PC-3 (cell line): ENCODE measurements at regions of chr4 and their contacts with region 1.

Region 1: DNA sequence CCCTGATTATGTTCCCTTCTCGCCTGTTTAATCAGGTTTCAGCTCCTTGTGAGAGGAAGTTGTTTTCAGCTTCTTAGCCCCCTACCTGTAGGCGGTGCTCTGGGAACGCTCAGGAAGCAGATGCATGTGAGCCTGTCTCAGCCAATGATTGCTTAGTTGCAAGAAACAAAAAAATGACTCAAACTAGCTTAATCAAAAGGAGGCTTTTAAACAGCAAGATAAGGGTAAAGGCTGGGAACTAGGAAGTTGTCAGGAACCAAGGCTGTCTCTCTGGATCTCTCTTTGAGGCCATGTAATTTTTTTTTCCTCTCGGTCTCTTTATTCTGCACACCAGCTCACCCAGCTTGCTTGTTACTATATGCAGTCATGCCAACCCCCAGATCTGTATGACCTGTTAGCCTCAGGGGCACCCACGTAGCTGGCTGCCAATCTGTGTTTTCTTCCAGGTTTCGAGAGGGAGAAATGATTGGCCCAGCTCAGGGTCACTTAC is 109.1 kb downstream of the PTTG2 start:
- DNase-seq: peak; percentile 77
- ATAC-seq: peak; percentile 88
- H3K4me3 ChIP-seq: no peak overlapping the region
- H3K27ac ChIP-seq: no peak overlapping the region
- H3K4me1 ChIP-seq: peaks cover 6% of the 10 kb centered on the region
- H3K27me3 ChIP-seq: no peaks in the 10 kb centered on the region
- CTCF ChIP-seq: peak; percentile 91

Region 2: DNA sequence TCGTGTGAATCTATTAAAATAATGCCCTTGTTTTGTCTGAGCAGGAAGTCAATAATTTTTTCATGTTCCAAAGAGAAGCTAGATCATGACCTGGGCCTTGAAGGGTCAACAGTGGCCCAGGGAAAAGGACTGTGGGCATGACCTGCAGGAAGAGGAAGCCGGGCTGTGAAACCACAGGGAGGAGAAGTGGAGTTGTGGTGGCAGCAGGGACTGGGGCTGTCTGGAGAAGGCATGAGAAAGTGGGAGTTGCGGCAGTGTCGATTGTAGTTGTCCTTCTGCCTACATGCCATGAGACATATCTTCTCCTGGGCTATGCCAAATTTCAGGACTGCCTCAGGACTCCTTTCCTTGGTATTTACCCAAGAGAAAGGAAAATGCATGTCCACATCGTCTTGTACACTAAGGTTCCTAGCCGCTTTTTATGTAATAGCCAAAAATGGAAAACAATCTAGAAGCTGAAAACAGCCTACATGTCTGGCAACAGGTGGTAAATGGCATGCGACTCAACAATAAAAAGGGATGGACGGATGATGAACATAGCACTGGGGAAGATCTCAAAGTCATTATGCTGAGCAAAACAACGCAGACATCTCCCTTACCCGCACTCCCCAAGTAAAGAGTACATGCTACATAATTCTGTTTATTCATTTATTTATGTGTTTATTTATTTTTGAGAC is 122.7 kb before region 1 on chr4:
- CTCF ChIA-PET with region 1: no interaction called
- POLR2A ChIA-PET with region 1: no interaction called
- intact Hi-C with region 1: no loop called
- DNase-seq: no peak
- ATAC-seq: no peak
- H3K4me3 ChIP-seq: no peak overlapping the region
- H3K27ac ChIP-seq: no peak overlapping the region
- H3K4me1 ChIP-seq: peaks cover 6% of the 10 kb centered on the region; the same call in 1 of the 2 replicates
- H3K27me3 ChIP-seq: no peaks in the 10 kb centered on the region
- CTCF ChIP-seq: no peak

Region 3: DNA sequence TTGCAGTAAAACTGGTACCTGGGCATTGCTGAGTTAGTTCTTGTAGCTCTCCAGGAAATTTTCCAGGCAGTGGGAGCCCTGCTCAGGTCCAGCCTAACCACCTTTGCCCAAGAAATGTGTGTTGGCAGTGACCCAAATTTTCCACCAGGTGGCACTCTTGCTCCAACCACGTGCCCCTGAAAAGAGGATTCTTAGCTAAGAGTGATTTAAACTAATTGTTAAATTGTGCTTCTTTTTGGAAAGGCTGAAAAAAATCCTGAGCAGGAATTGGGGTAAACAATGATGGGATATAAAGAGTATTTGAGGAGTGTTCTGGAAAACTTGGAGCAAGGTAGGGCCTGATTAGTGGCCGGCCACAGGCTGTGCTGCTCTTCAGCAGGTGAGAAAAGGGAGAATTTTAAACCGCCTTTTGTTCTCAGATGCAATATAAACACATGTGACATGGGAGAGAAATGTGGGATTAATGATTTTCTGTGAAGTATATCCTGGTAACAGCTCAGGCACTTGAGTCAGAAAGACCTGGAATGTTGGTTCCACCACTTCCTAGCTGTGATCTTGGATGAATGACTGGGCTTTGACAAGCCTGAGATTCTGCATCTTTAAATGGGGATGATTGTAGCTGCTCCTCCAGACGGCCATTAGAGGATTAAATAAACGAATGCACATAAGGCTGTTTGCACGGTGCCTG is 110.5 kb after region 1 on chr4:
- CTCF ChIA-PET with region 1: interaction called, 14 read pairs
- POLR2A ChIA-PET with region 1: no interaction called
- intact Hi-C with region 1: loop called (anchors 1 kb)
- DNase-seq: peak; percentile 78
- ATAC-seq: peak; percentile 86
- H3K4me3 ChIP-seq: no peak overlapping the region
- H3K27ac ChIP-seq: peak overlapping the region; percentile 72
- H3K4me1 ChIP-seq: peaks cover 15% of the 10 kb centered on the region
- H3K27me3 ChIP-seq: no peaks in the 10 kb centered on the region
- CTCF ChIP-seq: peak; percentile 90

Region 4: DNA sequence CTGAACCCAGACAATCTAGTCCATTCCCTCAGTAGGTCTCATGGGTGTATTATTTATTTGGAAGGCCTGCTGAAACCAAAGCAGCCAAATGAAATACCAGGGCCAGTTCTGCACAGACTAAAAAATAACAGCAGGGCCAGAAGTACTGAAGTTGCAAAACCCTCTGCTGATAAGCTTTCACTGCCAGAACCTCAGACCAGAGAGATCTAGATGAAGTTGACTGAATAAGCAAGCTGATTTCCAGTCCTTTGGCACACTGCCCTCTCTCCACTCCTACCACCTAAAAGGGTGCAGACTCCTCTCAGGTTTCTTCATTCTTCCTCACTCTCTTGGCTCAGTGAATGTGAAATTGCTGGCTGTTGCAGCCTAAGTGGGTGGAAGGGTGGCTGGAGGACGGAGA is 318.0 kb after region 1 on chr4:
- CTCF ChIA-PET with region 1: no interaction called
- POLR2A ChIA-PET with region 1: no interaction called
- intact Hi-C with region 1: no loop called
- DNase-seq: no peak
- ATAC-seq: no peak
- H3K4me3 ChIP-seq: no peak overlapping the region
- H3K27ac ChIP-seq: no peak overlapping the region
- H3K4me1 ChIP-seq: no peaks in the 10 kb centered on the region
- H3K27me3 ChIP-seq: no peaks in the 10 kb centered on the region
- CTCF ChIP-seq: no peak